H1 (cell line): ENCODE measurements at regions of chr17 and their contacts with region 1.

Region 1: DNA sequence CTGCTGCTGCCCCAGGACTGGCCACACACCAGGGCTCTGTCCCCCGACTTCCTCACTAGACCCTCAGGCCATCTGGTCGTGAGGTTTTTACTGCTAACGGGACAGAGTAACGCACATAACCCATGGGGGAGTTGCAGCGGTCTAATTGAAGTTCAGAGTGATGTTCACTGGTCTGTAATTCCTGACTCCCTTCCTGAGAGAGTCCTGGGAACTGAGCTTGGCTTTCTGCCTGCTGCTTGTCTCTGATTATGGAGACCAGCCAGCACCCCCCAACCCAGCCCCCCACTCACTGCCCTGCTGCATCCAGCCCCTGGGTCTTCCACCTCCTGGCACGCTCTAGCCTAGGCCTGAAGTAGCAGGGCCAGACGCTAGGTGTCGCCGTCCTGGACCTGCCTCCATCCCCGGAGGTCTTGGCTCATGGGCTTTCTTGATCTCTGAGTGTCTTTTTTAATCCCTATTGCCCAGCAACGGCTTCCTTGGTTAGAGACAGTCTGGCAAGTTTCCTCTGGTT is 192.9 kb downstream of the CCDC182 start:
- DNase-seq: peak in 1 of 2 experiments; percentile 82
- H3K4me3 ChIP-seq: no peak overlapping the region
- H3K27ac ChIP-seq: peak overlapping the region; percentile 29; the same call in 1 of the 2 replicates
- H3K4me1 ChIP-seq: peaks cover 8 to 46% (median 25%) of the 10 kb centered on the region in 4 experiments
- H3K27me3 ChIP-seq: no peaks in the 10 kb centered on the region
- CTCF ChIP-seq: peak; percentile 76 to 98 (median 87)
- EP300 ChIP-seq: no peak
- POLR2A ChIP-seq: no peak
- RAD21 ChIP-seq: peak; percentile 56 to 69

Region 2: GRCh38 chr17:57350277-57350676 is 201.9 kb before region 1 on chr17:
- CTCF ChIA-PET with region 1: no interaction called
- POLR2A ChIA-PET with region 1: no interaction called
- DNase-seq: no peak
- H3K4me3 ChIP-seq: no peak overlapping the region
- H3K27ac ChIP-seq: no peak overlapping the region
- H3K4me1 ChIP-seq: peaks cover 0 to 2% (median 0%) of the 10 kb centered on the region in 4 experiments; a peak in 1 of 7 replicates
- H3K27me3 ChIP-seq: no peaks in the 10 kb centered on the region
- CTCF ChIP-seq: no peak
- EP300 ChIP-seq: no peak
- POLR2A ChIP-seq: no peak
- RAD21 ChIP-seq: no peak

Region 3: DNA sequence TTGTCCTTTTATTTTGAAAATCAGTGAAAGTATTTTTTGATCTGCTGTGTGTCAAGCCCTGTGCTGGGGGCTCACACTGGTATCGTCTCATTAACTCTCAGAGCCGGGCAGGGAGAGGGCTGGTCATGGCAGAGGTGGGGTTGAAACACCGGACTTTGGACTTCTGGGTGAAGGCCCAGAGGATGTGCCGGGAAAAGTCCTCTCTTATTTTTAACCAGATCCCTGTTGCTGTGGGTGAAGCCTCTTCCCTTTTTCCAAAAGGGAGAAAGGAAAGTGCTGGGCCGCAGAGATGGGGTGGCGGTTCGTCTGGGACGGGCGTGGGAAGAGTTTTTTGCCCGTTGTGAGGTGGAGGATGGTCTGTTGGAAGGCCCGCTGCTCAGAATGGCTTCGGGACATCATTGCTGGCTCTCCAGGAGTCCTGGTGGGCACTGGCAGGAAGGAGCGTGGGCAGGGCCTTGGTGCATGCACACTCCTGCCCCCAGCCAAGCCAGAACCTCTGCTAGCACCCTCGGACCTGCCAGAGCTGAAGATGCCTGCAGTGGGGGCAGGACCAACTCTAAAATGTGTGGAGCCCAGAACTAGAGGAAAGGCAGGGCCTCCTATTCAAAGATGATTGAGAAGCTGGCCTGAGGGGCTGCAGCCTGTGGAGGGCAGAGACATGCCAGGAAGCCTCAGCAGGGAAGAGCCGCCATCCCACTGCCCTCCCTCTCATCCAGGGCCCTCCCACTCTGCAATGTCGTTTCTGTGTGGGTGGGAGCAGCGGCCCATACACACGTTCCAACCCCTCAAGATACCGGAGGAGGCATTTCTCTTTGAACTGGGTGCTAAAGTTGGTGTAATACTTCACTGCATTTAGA is 20.3 kb before region 1 on chr17:
- CTCF ChIA-PET with region 1: interaction called, 98 read pairs
- POLR2A ChIA-PET with region 1: no interaction called
- DNase-seq: no peak
- H3K4me3 ChIP-seq: no peak overlapping the region
- H3K27ac ChIP-seq: no peak overlapping the region
- H3K4me1 ChIP-seq: peaks cover 10 to 18% (median 14%) of the 10 kb centered on the region in 4 experiments
- H3K27me3 ChIP-seq: no peaks in the 10 kb centered on the region
- CTCF ChIP-seq: no peak
- EP300 ChIP-seq: no peak
- POLR2A ChIP-seq: no peak
- RAD21 ChIP-seq: no peak; a peak in 1 of 4 replicates

Region 4: DNA sequence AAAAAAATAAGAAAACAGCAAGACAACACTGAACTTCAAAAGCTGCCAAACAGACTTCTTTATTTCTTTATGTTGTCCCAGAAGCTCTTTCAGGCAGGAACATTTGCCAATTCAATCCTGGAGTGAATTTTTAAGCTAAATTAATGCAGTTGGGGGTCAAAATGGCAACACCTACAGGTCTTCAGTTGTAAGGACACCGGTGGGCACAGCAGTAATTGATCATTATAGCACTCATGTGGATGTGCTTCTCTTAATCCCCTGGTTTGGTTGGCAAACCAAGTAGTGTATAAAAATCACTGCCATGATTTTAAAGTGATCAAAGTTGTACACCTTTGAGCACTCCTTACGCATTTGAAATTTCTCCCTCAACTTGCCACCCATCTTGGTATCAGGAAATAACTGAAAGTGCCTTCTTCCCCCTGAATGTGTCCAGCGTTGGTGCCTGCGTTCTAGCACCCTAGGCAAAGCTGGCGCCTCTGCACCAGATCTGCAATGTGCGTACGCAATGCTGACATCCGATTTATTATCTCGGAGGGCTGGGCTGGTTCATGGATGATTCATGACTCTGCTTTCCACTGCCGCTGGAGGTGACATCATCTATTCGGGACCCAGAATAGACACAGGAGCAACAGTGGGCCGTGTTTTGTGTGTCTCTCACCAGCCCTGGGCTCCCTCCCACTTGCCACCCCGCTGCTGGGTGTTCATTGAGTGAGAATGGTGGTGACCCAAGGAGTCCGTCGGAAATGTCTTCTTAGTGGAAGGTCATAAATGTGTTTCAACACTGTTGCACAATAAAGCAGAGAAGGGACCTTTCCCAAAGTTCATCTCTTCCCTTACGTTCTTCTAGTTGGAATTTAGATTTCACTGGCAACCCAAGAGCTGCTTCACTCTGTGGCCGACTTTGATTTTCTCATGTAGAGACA is 10.4 kb before region 1 on chr17:
- CTCF ChIA-PET with region 1: interaction called, 98 read pairs
- POLR2A ChIA-PET with region 1: interaction called, 5 read pairs
- DNase-seq: no peak
- H3K4me3 ChIP-seq: no peak overlapping the region
- H3K27ac ChIP-seq: no peak overlapping the region
- H3K4me1 ChIP-seq: peaks cover 2 to 29% (median 13%) of the 10 kb centered on the region in 4 experiments; a peak in 6 of 7 replicates
- H3K27me3 ChIP-seq: no peaks in the 10 kb centered on the region
- CTCF ChIP-seq: peak in 1 of 3 experiments; percentile 23; a peak in 1 of 4 replicates
- EP300 ChIP-seq: no peak
- POLR2A ChIP-seq: no peak
- RAD21 ChIP-seq: no peak

Region 5: DNA sequence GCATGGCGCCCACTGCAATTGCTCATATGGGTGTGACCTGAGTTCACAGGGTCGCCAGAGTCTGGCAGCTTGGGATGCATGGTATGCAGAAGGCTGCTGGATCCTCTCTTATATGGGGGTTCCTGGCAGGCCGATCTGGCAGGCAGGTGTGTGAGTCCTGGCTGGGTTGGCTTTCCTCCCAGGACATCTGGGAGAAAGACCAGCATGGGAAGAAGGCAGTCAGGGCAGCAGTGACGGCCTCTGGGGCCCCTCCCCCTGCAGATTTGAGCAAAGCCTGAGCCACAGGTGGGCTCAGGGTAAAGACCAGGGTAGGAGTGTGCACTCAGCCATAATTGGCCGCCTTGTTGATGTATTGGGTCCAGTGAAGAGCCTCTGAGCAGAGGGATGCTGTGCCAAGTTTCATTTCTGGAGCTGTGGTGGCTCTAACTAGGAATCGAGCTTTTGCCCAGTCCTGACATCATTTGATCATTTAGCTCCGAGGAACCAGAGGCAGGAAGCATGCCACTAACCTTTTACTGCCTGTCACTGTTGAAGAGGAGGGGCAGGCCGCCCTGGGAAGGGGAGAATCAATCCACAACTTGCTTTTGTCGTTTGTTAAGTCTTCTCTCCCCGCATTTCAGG is 18.7 kb after region 1 on chr17:
- CTCF ChIA-PET with region 1: interaction called, 26 read pairs
- POLR2A ChIA-PET with region 1: no interaction called
- DNase-seq: no peak
- H3K4me3 ChIP-seq: no peak overlapping the region
- H3K27ac ChIP-seq: no peak overlapping the region
- H3K4me1 ChIP-seq: peaks cover 0 to 8% (median 2%) of the 10 kb centered on the region in 4 experiments; a peak in 5 of 7 replicates
- H3K27me3 ChIP-seq: no peaks in the 10 kb centered on the region
- CTCF ChIP-seq: no peak
- EP300 ChIP-seq: no peak
- POLR2A ChIP-seq: no peak
- RAD21 ChIP-seq: no peak

Region 6: GRCh38 chr17:57584050-57584551 is 31.9 kb after region 1 on chr17:
- CTCF ChIA-PET with region 1: interaction called, 23 read pairs
- POLR2A ChIA-PET with region 1: no interaction called
- DNase-seq: peak in 1 of 2 experiments; percentile 10
- H3K4me3 ChIP-seq: no peak overlapping the region
- H3K27ac ChIP-seq: no peak overlapping the region
- H3K4me1 ChIP-seq: peaks cover 0 to 8% (median 3%) of the 10 kb centered on the region in 4 experiments; a peak in 4 of 7 replicates
- H3K27me3 ChIP-seq: no peaks in the 10 kb centered on the region
- CTCF ChIP-seq: peak; percentile 43 to 58 (median 49)
- EP300 ChIP-seq: no peak
- POLR2A ChIP-seq: no peak
- RAD21 ChIP-seq: peak; percentile 49 to 53